ENCODE measurements at regions of chr15 and their contacts with region 1.

Region 1: DNA sequence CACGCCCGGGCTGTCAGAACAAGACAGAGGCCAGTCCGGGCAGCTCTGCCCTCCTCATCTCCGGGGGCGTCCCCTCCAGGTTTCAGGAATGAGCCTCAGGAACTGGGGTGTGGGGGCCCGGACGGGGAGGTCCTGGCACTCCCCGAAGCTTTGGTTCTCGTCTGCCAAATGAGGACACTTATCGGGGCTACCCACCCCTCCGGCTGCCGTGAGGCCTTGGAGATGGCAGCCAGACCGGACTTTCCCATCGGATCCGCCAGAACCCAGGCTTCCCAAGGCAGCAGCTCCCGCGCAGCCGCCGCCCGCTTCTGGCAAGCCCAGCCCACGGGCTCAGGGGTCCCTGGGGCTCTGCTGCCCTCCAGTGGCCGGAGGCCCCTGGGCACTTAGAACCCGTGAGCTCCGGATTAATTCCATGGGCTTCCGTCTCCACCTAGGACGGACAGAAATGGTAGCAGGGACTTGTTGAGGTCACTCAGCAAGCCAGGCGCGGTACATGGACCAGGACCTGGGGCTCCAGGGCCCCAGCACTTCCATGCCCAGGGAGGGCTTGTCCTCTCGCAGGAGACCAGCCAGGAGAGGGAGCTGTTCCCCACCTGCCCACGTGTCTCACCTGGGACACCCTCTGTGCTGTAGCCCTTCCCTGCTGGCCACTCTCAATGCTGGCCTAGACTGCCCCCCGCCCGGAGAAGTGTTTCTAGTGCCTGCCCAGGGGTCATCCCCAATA is 89.4 kb downstream of the LINGO1 start:
- DNase-seq: peak; percentile 80 to 96 (median 91)
- ATAC-seq: peak; percentile 89 to 95 (median 90)
- H3K4me3 ChIP-seq: peak overlapping the region; percentile 27 to 48 (median 41)
- H3K27ac ChIP-seq: peak overlapping the region in 3 of 4 donors; percentile 35 to 60 (median 54)
- H3K4me1 ChIP-seq: peaks cover 6 to 16% (median 16%) of the 10 kb centered on the region in 3 donors
- H3K27me3 ChIP-seq: no peaks in the 10 kb centered on the region
- CTCF ChIP-seq: peak; percentile 92 to 97 (median 95)

Region 2: GRCh38 chr15:77024271-77025082 is 518.8 kb before region 1 on chr15:
- intact Hi-C with region 1: loop called in 1 of 3 experiments (anchors 10 kb)
- DNase-seq: peak; percentile 44 to 92 (median 76)
- ATAC-seq: peak; percentile 67 to 82 (median 74)
- H3K4me3 ChIP-seq: no peak overlapping the region
- H3K27ac ChIP-seq: no peak overlapping the region
- H3K4me1 ChIP-seq: peaks cover 0 to 4% (median 3%) of the 10 kb centered on the region in 3 donors
- H3K27me3 ChIP-seq: no peaks in the 10 kb centered on the region
- CTCF ChIP-seq: peak; percentile 87 to 98 (median 94)

Region 3: GRCh38 chr15:77107531-77108355 is 435.6 kb before region 1 on chr15:
- intact Hi-C with region 1: loop called in 2 of 3 experiments (anchors 10 kb)
- DNase-seq: peak in 5 of 6 donors; percentile 18 to 67 (median 43)
- ATAC-seq: peak; percentile 40 to 90 (median 86)
- H3K4me3 ChIP-seq: no peak overlapping the region
- H3K27ac ChIP-seq: no peak overlapping the region
- H3K4me1 ChIP-seq: no peaks in the 10 kb centered on the region
- H3K27me3 ChIP-seq: no peaks in the 10 kb centered on the region
- CTCF ChIP-seq: peak in 2 of 4 donors; percentile 31 to 38

Region 4: GRCh38 chr15:77599899-77600298 is 56.6 kb after region 1 on chr15:
- intact Hi-C with region 1: loop called in 1 of 3 experiments (anchors 10 kb)
- DNase-seq: no peak
- ATAC-seq: peak; percentile 35 to 58 (median 46)
- H3K4me3 ChIP-seq: no peak overlapping the region
- H3K27ac ChIP-seq: no peak overlapping the region
- H3K4me1 ChIP-seq: no peaks in the 10 kb centered on the region
- H3K27me3 ChIP-seq: no peaks in the 10 kb centered on the region
- CTCF ChIP-seq: no peak